Posterior vena cava (tissue), 2 donors: ENCODE measurements at regions of chr13 and their contacts with region 1.

Region 1: DNA sequence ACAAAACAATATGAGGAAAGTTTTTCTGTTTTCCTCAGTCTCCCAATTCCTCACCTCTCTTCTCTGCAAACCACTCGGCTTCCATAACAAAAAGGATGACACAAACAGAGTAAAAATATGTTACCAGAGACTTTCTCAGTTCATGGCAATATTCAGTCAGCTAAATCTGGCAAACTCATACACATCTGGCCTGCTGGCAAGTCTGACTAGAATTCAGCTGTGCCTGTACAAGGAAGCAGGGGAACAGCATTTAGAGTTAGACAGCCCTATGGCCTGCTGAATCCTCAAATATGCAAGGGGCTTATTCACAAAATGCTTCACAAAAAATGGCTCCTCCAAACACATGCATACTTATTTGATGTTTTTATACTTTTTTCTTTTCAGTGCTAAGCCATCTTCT is 227.8 kb downstream of the ENOX1 start:
- DNase-seq: no peak

Region 2: DNA sequence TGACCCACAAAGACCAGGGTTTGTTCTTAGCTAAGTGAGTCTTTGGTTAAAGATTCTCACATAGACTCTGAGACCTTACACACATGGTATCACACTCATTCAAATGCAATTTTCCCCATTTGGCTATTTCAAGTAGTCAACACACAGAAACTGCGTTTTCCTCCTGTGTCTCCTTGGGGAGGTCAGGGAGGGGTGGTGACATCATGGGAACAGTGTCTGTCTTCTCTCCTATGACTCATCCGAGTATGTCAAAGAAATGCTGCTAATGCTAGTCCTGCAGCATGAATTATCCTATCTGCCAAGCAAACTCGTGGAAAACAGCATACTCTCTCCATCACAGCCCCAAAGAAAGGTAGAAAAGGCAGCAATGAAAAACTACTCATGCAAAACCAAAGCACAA is 127.6 kb after region 1 on chr13:
- intact Hi-C with region 1: loop called in 1 of 2 experiments (anchors 10 kb)
- DNase-seq: no peak